ENCODE measurements at regions of chr13 and their contacts with region 1.

Region 1: DNA sequence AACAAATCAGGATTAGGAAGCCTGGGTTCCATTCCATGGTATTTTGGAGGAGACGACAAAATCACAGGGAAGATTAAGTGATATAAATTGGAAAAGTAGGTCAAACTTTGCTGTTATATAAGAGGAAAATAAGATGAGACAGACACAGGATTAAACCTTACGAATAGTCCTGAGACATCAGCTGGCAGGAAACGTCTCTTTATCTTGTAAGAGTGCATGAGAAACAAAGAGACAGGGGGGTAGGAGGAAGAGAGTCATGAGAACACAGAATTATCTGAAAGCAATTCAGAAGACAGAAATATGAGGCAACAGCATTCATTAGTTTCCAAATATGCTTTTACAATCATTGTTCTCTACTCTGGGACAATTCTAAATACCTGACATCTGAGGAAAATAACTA is 310.6 kb upstream of the MIR17HG start:
- DNase-seq: no peak
- ATAC-seq: no peak
- H3K4me3 Mint-ChIP-seq: no peak overlapping the region
- H3K27ac Mint-ChIP-seq: no peak overlapping the region
- H3K4me1 Mint-ChIP-seq: no peaks in the 10 kb centered on the region
- H3K27me3 Mint-ChIP-seq: no peaks in the 10 kb centered on the region
- CTCF ChIP-seq: no peak

Region 2: GRCh38 chr13:91020461-91021034 is 16.3 kb before region 1 on chr13:
- CTCF ChIA-PET with region 1: no interaction called
- POLR2A ChIA-PET with region 1: no interaction called
- intact Hi-C with region 1: loop called (anchors 1 kb)
- DNase-seq: no peak
- ATAC-seq: no peak
- H3K4me3 Mint-ChIP-seq: no peak overlapping the region
- H3K27ac Mint-ChIP-seq: no peak overlapping the region
- H3K4me1 Mint-ChIP-seq: no peaks in the 10 kb centered on the region
- H3K27me3 Mint-ChIP-seq: no peaks in the 10 kb centered on the region
- CTCF ChIP-seq: no peak